ENCODE measurements at regions of chr1 and their contacts with region 1.

Region 1: GRCh38 chr1:40849801-40850592 is 12.2 kb downstream of the CITED4 start:
- DNase-seq: peak; percentile 86
- ATAC-seq: peak; percentile 92
- H3K4me3 Mint-ChIP-seq: peak overlapping the region; percentile 32
- H3K27ac Mint-ChIP-seq: peak overlapping the region; percentile 80
- H3K4me1 Mint-ChIP-seq: peaks cover 32% of the 10 kb centered on the region
- H3K27me3 Mint-ChIP-seq: peaks cover 4% of the 10 kb centered on the region

Region 2: GRCh38 chr1:40610156-40610555 is 239.8 kb before region 1 on chr1:
- CTCF ChIA-PET with region 1: interaction called, 10 read pairs
- POLR2A ChIA-PET with region 1: no interaction called
- DNase-seq: no peak
- ATAC-seq: no peak
- H3K4me3 Mint-ChIP-seq: no peak overlapping the region
- H3K27ac Mint-ChIP-seq: no peak overlapping the region
- H3K4me1 Mint-ChIP-seq: no peaks in the 10 kb centered on the region
- H3K27me3 Mint-ChIP-seq: peaks cover 2% of the 10 kb centered on the region

Region 3: DNA sequence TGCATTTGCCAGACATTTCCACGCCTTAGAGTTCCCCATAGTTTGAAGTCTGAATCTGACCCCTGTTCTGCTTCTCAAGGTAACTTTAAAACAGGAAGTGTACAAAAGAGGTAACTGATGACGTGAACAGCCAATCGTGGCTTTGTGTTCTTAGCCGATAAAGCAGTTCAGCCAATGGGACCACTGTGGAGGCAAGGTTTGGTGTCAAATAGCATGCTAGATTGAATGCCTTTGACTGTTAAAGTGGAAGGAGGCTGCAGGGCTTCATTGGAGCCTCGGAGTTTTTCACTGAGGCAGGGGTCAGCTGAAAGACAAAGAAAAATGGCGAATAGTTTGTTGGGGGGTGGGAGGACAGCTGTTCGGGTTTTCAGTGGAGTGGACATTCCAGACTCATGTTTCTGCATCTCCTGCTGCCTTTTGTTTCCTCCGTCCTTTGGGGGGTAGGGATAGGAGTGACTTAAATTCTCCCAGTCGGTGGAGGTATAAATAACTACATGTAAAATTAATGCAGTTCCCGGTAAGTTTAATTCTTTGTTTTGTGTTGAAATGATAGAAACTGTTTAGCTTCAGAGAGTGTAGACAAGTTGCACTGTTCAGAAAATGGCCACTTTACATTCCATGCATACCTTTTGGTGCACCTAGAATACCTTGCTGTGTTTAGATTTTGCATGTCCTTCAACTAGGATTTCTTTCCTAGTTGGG is 140.7 kb before region 1 on chr1:
- CTCF ChIA-PET with region 1: interaction called, 10 read pairs
- POLR2A ChIA-PET with region 1: no interaction called
- DNase-seq: peak; percentile 91
- ATAC-seq: peak; percentile 98
- H3K4me3 Mint-ChIP-seq: peak overlapping the region; percentile 98
- H3K27ac Mint-ChIP-seq: peak overlapping the region; percentile 98
- H3K4me1 Mint-ChIP-seq: peaks cover 61% of the 10 kb centered on the region
- H3K27me3 Mint-ChIP-seq: no peaks in the 10 kb centered on the region

Region 4: GRCh38 chr1:40763742-40764532 is 86.1 kb before region 1 on chr1:
- CTCF ChIA-PET with region 1: interaction called, 273 read pairs
- POLR2A ChIA-PET with region 1: interaction called, 4 read pairs
- DNase-seq: no peak
- ATAC-seq: peak; percentile 50
- H3K4me3 Mint-ChIP-seq: peak overlapping the region; percentile 62
- H3K27ac Mint-ChIP-seq: peak overlapping the region; percentile 95
- H3K4me1 Mint-ChIP-seq: peaks cover 49% of the 10 kb centered on the region
- H3K27me3 Mint-ChIP-seq: no peaks in the 10 kb centered on the region

Region 5: DNA sequence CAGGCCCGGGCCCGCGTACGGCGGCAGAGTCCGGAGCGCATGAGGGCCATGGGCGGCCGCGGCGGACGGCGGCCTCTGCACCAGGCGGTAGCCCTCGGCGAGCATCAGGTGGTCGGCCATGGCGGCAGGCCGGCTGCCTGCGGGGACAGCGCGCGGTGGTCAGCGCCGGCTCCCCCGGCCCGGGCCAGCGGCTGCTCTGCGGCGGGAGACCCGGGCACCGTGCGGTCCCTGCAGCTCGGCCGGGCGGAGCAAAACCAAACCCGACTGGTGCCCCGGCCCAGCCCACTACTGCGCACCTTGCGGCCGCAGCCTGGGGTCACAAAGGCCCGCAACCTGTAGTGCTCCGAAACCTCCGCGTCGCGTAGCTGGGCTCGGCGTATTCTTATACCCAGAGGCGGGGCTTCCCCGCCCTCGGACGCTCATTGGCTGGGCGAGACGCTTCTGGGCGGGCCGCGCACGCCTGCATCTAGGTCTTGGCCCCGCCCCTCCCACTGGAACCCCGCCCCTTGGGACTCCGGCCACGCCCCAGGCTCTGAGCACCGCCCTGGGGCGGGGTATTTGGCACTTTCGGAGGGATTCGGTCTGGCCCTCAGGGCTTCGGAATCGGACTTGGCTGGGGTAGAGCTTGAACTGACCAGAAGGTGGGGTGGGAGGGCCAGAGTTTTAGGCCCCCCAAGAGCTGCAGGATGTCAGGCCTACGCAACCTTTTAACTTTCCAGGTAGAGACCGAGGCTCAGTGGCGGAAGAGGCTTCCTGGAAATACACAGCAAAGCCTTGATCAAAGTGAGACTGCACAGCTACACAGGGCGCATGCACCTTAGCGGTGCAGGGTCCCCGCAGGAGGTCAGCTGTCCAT is 12.2 kb after region 1 on chr1 and contains the start of gene CITED4:
- CTCF ChIA-PET with region 1: interaction called, 31 read pairs
- POLR2A ChIA-PET with region 1: interaction called, 5 read pairs
- DNase-seq: peak; percentile 97
- ATAC-seq: peak; percentile 93
- H3K4me3 Mint-ChIP-seq: peak within 1 kb of the TSS; percentile 79
- H3K27ac Mint-ChIP-seq: peak within 1 kb of the TSS; percentile 96
- H3K4me1 Mint-ChIP-seq: peaks cover 30% of the 10 kb centered on the region
- H3K27me3 Mint-ChIP-seq: peaks cover 21% of the 10 kb centered on the region
- total RNA-seq, gene CITED4: 9.1 to 10.0 TPM

Measured in activated CD8-positive, alpha-beta T cell treated with anti-CD3 and anti-CD28 coated beads, Interleukin-2, amount 10 ng/mL, durations not matched to agents 7 days and 5 days (primary cell).